Right ventricle myocardium superior (tissue), 1 donor: ENCODE measurements at regions of chr11 and their contacts with region 1.

Region 1: DNA sequence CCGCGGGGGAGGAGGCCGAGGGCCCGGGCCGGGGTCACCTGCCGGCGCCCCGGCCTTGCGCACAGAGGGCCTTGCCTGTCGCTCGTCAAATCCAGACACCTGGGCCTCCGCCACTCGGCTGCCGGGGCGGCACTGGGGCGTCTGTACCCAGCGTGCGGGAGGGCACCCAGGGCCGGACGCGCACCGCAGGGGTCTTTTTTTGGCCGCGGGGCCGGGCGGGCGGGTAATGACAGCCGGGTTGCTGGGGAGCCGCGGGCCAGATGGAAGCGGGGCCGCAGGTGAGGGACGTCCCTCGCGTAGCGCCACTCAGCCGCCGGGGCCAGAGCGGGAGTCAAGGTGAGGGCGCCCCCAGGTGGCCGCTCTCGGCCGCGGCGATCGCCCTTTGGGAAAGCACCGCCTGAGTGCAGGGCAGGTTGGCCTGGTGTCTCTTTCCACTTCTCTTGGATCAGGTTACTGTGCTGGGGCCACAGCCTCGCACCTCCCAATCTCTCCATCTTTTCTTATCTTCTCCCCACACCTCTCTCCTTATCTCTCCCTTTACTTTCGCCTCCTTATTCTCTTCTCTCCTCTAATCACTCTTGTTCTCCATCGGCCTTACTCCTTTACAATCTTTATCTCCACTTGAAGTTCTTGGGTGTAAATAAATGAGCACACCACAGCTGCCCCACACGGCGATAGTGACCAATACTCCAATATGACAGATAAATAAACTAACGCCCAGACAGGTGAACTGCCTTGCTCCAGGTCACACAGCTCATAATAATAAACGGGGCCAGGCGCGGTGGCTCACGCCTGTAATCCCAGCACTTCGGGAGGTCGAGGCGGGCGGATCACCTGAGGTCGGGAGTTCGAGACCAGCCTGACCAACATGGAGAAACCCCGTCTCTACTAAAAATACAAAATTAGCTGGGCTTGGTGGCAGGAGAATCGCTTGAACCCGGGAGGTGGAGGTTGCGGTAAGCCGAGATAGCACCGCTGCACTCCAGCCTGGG is 3.7 kb downstream of the PHLDB1 start:
- DNase-seq: peak; percentile 90
- ATAC-seq: peak; percentile 54

Region 2: GRCh38 chr11:118659314-118659952 is 48.3 kb after region 1 on chr11:
- intact Hi-C with region 1: loop called (anchors 5 kb)
- DNase-seq: peak; percentile 95
- ATAC-seq: peak; percentile 84

Region 3: DNA sequence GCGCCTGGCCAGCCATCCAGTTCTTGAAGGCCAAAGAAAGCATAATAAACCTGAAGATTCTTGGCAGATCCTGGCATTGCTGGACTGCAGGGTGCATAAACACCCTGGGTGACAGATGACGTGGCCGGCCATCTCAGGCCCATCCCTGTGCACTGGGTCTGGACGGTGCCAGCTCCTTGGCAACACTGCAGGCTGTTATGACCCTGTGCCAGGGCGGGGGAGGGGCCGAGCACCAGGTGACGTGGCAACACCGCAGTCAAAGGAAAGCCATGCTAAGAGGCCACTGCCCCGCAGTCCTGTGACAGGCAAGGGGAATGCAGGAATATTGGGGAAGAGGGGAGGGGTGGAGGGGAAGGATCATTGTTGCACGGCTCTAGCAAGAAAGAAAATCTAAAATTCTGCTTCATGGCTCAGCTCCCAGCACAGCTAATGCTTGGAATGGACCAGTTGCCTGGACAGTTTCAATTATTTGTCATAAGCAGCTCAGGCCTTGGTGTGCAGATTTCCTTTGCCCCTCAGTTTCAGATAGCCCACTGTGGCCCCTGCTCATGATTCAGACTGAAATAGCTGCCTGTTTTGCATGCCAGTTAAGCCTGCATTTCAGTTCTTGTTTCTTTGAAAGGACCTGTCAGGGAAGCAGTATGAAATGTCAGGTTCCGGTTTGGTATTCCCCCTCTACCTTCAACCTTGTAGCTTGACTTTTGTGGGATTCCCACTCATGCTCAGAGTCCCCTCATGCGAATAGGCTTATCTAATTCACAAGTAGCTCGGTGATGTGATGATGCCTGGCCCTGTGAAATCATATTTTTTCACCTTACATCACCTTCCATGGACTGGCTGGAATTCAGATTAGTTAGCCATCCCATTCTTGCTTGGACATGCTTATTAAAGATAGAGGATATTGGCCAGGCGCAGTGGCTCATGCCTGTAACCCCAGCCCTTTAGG is 209.6 kb after region 1 on chr11:
- intact Hi-C with region 1: no loop called
- DNase-seq: peak; percentile 83
- ATAC-seq: peak; percentile 99